ENCODE measurements at regions of chr20 and their contacts with region 1.

Region 1: GRCh38 chr20:10673988-10674711 is at the start of gene JAG1:
- DNase-seq: peak; percentile 94 to 98 (median 96)
- ATAC-seq: peak; percentile 88 to 90 (median 89)
- H3K4me3 ChIP-seq: peak within 1 kb of the TSS; percentile 73 to 98 (median 91)
- H3K27ac ChIP-seq: peak within 1 kb of the TSS; percentile 91 to 99 (median 98)
- H3K4me1 ChIP-seq: peaks cover 0 to 27% (median 12%) of the 10 kb centered on the region in 12 donors
- H3K27me3 ChIP-seq: no peaks in the 10 kb centered on the region
- CTCF ChIP-seq: no peak
- POLR2A ChIP-seq: peak; percentile 28 to 59
- total RNA-seq, gene JAG1: 20.9 to 42.6 (median 29.6) TPM

Region 2: GRCh38 chr20:10558635-10559187 is 115.4 kb before region 1 on chr20:
- intact Hi-C with region 1: loop called in 6 of 10 experiments (anchors 2 to 10 kb)
- DNase-seq: no peak
- ATAC-seq: peak in 1 of 4 donors; percentile 24
- H3K4me3 ChIP-seq: no peak overlapping the region
- H3K27ac ChIP-seq: peak overlapping the region in 6 of 12 donors; percentile 16 to 36 (median 30)
- H3K4me1 ChIP-seq: peaks cover 0 to 13% (median 0%) of the 10 kb centered on the region in 12 donors
- H3K27me3 ChIP-seq: no peaks in the 10 kb centered on the region
- CTCF ChIP-seq: peak in 2 of 12 donors; percentile 7 to 33
- POLR2A ChIP-seq: no peak

Region 3: DNA sequence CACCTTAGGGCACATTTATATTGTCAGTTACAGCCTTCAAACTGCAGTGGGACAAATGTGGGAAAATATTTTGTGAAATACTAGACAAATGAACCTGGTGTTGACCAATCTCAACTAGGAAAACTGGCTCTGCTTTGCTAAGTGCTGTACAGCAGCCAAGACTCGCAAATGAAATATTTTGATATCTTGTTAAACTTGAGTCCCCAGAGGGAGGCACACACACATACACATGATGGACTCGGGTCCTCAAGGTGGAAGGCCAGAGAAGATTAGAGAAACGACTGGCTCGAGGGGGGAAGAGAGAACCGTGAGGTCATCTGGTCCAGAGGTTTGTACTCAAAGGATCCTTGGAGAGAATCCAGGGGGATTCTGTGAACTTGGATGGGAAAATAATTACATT is 66.9 kb after region 1 on chr20:
- intact Hi-C with region 1: loop called in 4 of 10 experiments (anchors 5 to 10 kb)
- DNase-seq: peak in 1 of 5 donors; percentile 40
- ATAC-seq: peak in 2 of 4 donors; percentile 39 to 43
- H3K4me3 ChIP-seq: no peak overlapping the region
- H3K27ac ChIP-seq: peak overlapping the region in 6 of 12 donors; percentile 1 to 69 (median 35)
- H3K4me1 ChIP-seq: peaks cover 0 to 41% (median 12%) of the 10 kb centered on the region in 12 donors
- H3K27me3 ChIP-seq: no peaks in the 10 kb centered on the region
- CTCF ChIP-seq: no peak
- POLR2A ChIP-seq: no peak

Region 4: DNA sequence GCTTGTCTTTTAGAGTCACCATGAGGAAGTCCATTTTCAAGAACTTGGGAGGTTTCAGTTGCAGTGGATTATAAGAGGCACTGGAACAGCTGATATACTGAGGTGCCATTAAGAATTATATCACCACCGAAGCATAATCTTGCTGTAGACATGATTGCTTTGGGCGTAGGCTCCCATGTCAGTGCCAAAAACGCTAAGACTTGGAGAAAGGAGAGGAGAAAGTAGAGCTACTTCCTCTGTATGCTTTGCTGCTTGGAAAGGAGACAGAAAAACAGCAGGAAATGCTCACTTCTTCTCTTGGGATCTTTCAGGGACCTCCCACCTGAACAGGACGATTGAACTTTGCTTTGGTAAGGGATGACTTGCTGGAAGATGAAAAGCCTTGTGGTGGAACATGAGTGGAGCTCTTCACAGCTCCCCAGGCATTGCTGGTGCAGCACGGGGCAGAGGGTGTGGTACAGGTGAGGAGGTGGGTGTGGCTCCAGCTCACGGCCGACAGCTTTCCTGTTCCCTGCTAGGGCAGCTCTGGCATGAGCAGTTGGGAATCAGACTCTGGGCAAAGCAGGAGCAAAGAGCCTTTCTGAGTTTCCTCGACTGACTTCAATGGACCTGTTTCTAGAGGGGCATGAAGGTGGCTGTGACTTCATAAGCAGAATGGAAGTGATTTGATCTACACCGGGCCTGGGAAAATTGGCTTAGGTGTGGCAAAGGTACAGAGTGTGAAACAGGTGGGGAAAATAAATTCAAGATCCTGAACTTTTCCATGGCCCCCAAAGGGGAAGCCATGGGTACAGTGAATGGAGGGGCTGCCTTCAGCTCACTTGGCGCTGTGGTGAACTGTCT is 190.1 kb after region 1 on chr20:
- intact Hi-C with region 1: loop called in 5 of 10 experiments (anchors 5 to 10 kb)
- DNase-seq: peak in 4 of 5 donors; percentile 25 to 47 (median 40)
- ATAC-seq: peak; percentile 67 to 90 (median 84)
- H3K4me3 ChIP-seq: peak overlapping the region in 2 of 12 donors; percentile 5 to 12
- H3K27ac ChIP-seq: peak overlapping the region in 11 of 12 donors; percentile 53 to 78 (median 65)
- H3K4me1 ChIP-seq: peaks cover 0 to 24% (median 21%) of the 10 kb centered on the region in 12 donors
- H3K27me3 ChIP-seq: no peaks in the 10 kb centered on the region
- CTCF ChIP-seq: no peak
- POLR2A ChIP-seq: no peak

Region 5: GRCh38 chr20:11080781-11081377 is 406.7 kb after region 1 on chr20:
- intact Hi-C with region 1: loop called in 1 of 10 experiments (anchors 10 kb)
- DNase-seq: peak in 3 of 5 donors; percentile 12 to 27 (median 19)
- ATAC-seq: peak in 3 of 4 donors; percentile 39 to 61 (median 41)
- H3K4me3 ChIP-seq: no peak overlapping the region
- H3K27ac ChIP-seq: peak overlapping the region in 4 of 12 donors; percentile 22 to 51 (median 40)
- H3K4me1 ChIP-seq: peaks cover 0 to 14% (median 5%) of the 10 kb centered on the region in 12 donors
- H3K27me3 ChIP-seq: no peaks in the 10 kb centered on the region
- CTCF ChIP-seq: no peak
- POLR2A ChIP-seq: no peak

Region 6: DNA sequence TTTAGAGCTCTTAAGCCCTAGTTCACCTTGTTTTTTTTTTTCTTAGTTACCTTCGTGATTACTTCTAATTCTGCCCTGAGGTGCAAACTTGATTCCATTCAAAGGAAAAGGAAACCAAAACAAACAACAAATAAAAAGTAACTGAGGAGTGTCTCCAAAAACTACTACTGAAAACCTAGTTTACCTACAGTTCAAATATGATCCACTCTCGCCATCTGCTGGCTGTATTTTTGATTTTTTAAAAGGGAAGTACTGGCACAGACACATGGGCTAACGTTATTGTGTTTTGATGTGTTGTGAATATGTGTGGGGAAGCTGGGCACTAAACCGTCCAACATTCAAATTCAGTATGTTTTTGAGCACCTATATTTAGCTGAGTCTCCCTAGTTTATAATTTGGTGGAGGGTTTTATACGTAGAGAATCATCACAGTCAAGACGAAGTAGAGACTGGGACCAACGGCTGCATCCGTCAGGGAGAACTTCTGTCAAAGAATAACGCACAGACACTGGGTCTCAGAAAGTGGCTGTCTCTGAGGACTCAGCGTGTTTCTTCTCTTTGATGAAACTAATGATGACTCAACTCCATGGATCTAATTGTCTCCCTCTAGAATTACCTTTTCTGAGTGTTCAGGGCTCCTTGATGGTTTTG is 870.0 kb after region 1 on chr20:
- intact Hi-C with region 1: loop called in 3 of 10 experiments (anchors 10 kb)
- DNase-seq: peak in 2 of 5 donors; percentile 22 to 31
- ATAC-seq: peak; percentile 47 to 66 (median 60)
- H3K4me3 ChIP-seq: peak overlapping the region in 2 of 12 donors; percentile 22 to 25
- H3K27ac ChIP-seq: no peak overlapping the region
- H3K4me1 ChIP-seq: peaks cover 0 to 10% (median 0%) of the 10 kb centered on the region in 12 donors
- H3K27me3 ChIP-seq: no peaks in the 10 kb centered on the region
- CTCF ChIP-seq: peak; percentile 49 to 81 (median 66)
- POLR2A ChIP-seq: no peak